Aorta (tissue), 5 donors: ENCODE measurements at regions of chr4 and their contacts with region 1.

Region 1: DNA sequence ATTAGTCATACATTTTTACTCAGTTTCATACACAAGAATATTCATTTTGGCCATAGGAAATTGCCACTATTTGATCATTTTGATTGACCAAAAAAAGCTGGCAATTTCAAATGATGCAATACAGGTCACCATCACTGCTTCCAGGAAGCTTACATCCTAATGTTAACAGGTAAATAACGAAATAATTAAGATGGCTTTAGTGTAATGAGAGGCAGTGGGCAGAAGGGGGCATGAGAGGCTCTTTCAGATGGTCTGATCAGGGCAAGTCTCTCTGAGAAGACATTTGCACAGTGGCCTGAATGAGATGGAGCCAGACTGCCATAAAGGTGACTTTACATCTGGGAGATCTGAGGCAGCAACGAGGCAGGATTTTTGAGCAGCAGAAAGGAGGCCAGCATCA is 170.7 kb downstream of the SLIT2 start:
- DNase-seq: no peak
- ATAC-seq: peak; percentile 51
- H3K4me3 ChIP-seq: no peak overlapping the region
- H3K27ac ChIP-seq: no peak overlapping the region
- H3K4me1 ChIP-seq: peaks cover 0 to 2% of the 10 kb centered on the region in 2 donors
- H3K27me3 ChIP-seq: no peaks in the 10 kb centered on the region

Region 2: DNA sequence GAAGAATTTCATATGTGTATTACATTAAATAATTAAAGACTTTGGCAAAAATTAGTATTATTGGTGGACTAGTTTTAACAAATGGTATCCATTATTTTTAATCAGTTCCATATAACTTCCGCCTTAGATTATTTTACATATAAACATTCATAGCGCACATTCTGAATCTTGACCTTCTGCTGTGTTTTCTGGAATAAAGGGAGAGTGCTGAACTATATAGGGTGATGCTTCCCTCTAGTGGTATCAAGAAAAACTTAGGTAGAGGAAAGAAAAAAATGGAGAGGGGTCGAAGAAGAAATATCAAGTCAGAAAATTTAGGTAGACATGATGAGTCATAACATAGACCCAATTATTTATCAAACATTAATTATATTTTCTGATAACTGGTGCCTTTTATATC is 122.2 kb after region 1 on chr4:
- intact Hi-C with region 1: loop called (anchors 10 kb)
- DNase-seq: no peak
- ATAC-seq: peak; percentile 64
- H3K4me3 ChIP-seq: no peak overlapping the region
- H3K27ac ChIP-seq: no peak overlapping the region
- H3K4me1 ChIP-seq: no peaks in the 10 kb centered on the region
- H3K27me3 ChIP-seq: no peaks in the 10 kb centered on the region

Region 3: DNA sequence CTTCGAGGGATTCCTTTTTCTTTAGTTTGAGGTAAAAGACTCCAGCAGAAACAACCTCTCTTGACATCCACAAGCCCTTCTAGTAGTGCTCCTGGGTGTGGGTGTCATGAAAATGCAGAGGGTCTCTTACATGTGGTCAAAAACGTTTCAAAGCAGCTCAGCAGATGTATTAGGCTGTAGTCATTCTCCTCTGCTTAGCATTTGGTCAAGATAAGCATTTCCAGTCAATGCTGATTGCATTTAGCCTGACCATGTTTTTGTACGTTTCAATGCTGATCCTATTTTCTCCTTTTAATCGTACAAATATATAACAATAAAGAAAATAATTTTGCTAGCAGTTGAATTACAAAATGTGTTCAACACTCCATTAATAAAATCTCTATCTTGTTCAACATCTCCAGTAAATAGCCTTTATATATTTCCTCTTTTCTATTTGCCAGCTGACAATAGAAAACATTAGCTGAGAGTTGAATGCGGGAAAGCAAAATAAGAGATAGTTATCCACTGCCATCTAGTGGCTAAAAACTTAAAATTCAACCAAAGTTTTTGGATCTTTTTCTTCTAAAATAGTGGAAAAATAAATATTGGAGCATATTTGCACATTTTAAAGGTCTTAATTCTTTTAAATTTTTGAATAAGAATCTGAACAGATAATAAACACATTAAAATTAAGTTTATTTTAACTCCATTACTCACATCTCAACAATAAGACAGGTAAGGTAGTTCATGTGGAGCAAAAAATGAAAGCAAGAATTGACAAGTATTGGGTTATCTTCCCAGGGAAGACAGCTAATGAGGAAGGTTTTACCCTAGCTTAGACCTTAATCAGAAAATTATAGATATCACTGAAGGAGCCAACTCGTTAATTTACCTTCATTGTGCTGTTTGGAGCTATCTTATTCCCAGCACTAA is 262.7 kb after region 1 on chr4:
- intact Hi-C with region 1: loop called in 1 of 2 experiments (anchors 10 kb)
- DNase-seq: no peak
- ATAC-seq: no peak
- H3K4me3 ChIP-seq: no peak overlapping the region
- H3K27ac ChIP-seq: no peak overlapping the region
- H3K4me1 ChIP-seq: no peaks in the 10 kb centered on the region
- H3K27me3 ChIP-seq: no peaks in the 10 kb centered on the region